Caco-2 (cell line): ENCODE measurements at regions of chr19 and their contacts with region 1.

Region 1: GRCh38 chr19:17766543-17767131 is 15.4 kb downstream of the FCHO1 start:
- DNase-seq: peak; percentile 86 to 88
- H3K4me3 ChIP-seq: peak overlapping the region; percentile 28
- H3K4me3 Mint-ChIP-seq: peak overlapping the region; percentile 73
- H3K27ac Mint-ChIP-seq: no peak overlapping the region
- H3K4me1 ChIP-seq: no peaks in the 10 kb centered on the region
- H3K4me1 Mint-ChIP-seq: no peaks in the 10 kb centered on the region
- H3K27me3 ChIP-seq: no peaks in the 10 kb centered on the region
- H3K27me3 Mint-ChIP-seq: no peaks in the 10 kb centered on the region
- CTCF ChIP-seq: peak; percentile 69 to 90

Region 2: GRCh38 chr19:17658666-17659065 is 108.0 kb before region 1 on chr19:
- CTCF ChIA-PET with region 1: no interaction called
- POLR2A ChIA-PET with region 1: no interaction called
- intact Hi-C with region 1: no loop called
- DNase-seq: no peak
- H3K4me3 ChIP-seq: no peak overlapping the region
- H3K4me3 Mint-ChIP-seq: no peak overlapping the region
- H3K27ac Mint-ChIP-seq: no peak overlapping the region
- H3K4me1 ChIP-seq: no peaks in the 10 kb centered on the region
- H3K4me1 Mint-ChIP-seq: no peaks in the 10 kb centered on the region
- H3K27me3 ChIP-seq: no peaks in the 10 kb centered on the region
- H3K27me3 Mint-ChIP-seq: peaks cover 3% of the 10 kb centered on the region
- CTCF ChIP-seq: no peak

Region 3: DNA sequence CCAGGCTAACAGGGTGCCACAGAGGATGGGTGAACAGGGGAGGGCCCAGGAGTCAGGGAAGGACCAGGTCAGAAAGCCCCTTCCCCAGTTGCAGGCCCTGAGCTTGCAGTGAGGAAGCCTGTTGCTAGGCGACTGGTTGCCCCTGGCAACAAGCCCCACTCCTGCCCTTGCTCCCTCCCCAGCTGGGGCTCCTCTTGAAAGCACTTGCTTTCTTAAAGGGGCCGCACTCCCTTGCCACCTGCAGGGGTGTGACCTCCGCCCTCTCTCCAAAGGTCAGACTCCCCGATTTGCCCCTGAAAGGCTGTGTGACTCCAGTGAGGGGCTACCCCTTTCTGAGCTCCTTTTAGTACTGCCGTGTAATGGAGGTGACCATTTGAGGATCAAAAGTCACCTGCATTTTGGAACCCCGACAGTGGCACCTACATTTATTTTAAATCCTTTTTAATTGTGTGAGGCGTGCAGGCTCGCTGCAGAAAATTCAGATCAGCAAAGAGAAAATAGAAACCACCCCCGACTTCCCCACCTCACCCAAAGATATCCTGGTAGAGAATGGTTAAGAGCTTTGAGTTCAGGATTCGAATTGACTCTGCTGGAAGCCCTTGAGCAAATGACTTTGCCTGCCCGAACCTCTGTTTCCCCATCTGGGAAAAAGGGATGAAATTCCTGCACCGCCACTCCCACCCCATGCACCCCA is 10.5 kb before region 1 on chr19:
- CTCF ChIA-PET with region 1: interaction called, 11 read pairs
- POLR2A ChIA-PET with region 1: no interaction called
- intact Hi-C with region 1: no loop called
- DNase-seq: peak; percentile 48 to 57
- H3K4me3 ChIP-seq: no peak overlapping the region
- H3K4me3 Mint-ChIP-seq: no peak overlapping the region
- H3K27ac Mint-ChIP-seq: no peak overlapping the region
- H3K4me1 ChIP-seq: no peaks in the 10 kb centered on the region
- H3K4me1 Mint-ChIP-seq: no peaks in the 10 kb centered on the region
- H3K27me3 ChIP-seq: no peaks in the 10 kb centered on the region
- H3K27me3 Mint-ChIP-seq: peaks cover 3% of the 10 kb centered on the region
- CTCF ChIP-seq: no peak